Ascending aorta (tissue), 2 donors: ENCODE measurements at regions of chr2 and their contacts with region 1.

Region 1: DNA sequence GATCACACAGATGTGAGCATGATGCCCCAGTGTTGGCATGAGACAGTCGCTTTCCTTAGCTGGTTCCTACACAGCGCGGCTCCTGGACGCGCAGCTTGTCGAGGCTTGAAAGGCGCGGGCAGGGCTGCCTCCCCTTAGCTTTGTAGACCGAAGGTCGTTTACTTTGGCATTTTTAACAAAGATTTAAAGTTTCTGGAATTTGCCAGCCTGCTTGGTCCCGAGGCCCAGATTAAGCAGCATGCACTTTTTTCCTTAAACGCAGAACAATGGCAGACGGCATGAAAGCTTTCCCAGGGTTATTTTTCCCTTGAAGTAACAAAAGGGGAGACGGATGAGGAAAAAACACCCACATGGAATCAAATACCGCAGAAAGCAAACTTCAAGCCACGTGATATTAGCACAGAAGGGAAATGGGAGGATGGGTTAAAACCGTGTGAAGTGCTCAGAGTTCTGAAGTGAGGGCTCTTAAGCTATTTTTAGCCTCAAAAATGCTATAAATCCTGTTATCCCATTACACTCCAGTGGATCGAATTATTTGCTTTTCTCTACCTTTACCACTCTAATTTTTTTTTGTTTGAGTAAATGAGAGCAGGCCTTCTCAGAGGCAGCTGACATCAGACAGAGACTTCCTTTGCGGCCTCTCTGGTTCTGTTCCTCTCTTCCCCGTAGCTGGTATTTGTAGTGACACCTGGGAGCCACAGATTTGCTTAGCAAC is 55.7 kb downstream of the NPAS2 start:
- DNase-seq: no peak
- H3K4me3 ChIP-seq: peak overlapping the region in 1 of 2 donors; percentile 4
- H3K27ac ChIP-seq: peak overlapping the region; percentile 9 to 64
- H3K4me1 ChIP-seq: peaks cover 7 to 25% of the 10 kb centered on the region in 2 donors
- H3K27me3 ChIP-seq: no peaks in the 10 kb centered on the region
- CTCF ChIP-seq: no peak

Region 2: DNA sequence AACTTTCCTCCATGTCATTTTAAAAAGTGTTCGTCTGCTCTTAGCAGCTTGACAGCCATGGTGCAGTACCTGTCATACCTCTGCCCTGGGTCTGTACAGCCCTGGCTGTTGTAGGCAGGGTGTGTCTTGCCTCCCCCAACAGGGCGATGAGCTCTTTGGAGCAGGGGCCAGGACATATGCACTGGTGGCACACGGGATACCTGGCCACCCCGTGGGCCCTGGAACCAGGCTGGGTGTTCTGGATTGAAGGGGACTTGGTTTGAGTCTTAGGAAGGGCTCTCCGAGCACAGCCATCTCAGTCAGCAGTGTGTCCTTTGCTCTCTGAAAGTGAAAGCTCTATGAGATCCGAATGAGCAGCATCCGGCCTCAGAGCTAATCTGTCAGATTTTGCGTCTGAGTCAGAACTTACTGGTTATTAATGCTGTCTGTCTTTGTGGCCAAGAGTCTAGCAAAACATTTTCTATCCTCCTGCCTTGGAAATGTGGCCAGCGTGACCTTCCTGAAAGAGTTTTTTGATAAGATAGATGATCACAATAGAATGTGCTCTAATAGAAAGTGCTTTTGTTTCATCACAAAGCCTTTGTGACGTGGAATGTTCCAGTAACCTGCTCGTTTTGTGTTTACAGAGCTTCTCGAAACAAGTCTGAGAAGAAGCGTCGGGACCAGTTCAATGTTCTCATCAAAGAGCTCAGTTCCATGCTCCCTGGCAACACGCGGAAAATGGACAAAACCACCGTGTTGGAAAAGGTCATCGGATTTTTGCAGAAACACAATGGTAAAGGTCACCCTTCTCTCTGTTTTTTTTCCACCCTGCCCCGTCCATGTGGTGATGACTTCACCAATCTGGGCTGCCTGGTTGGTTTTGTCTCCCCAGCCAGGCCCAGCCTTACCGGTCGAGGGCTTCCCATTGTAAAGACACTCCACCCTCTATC is 49.1 kb after region 1 on chr2:
- intact Hi-C with region 1: loop called (anchors 5 kb)
- DNase-seq: peak in 1 of 2 donors; percentile 71
- H3K4me3 ChIP-seq: peak overlapping the region; percentile 41 to 58
- H3K27ac ChIP-seq: peak overlapping the region; percentile 86 to 90
- H3K4me1 ChIP-seq: peaks cover 5 to 11% of the 10 kb centered on the region in 2 donors
- H3K27me3 ChIP-seq: no peaks in the 10 kb centered on the region
- CTCF ChIP-seq: no peak